ENCODE measurements at regions of chr4 and their contacts with region 1.

Region 1: DNA sequence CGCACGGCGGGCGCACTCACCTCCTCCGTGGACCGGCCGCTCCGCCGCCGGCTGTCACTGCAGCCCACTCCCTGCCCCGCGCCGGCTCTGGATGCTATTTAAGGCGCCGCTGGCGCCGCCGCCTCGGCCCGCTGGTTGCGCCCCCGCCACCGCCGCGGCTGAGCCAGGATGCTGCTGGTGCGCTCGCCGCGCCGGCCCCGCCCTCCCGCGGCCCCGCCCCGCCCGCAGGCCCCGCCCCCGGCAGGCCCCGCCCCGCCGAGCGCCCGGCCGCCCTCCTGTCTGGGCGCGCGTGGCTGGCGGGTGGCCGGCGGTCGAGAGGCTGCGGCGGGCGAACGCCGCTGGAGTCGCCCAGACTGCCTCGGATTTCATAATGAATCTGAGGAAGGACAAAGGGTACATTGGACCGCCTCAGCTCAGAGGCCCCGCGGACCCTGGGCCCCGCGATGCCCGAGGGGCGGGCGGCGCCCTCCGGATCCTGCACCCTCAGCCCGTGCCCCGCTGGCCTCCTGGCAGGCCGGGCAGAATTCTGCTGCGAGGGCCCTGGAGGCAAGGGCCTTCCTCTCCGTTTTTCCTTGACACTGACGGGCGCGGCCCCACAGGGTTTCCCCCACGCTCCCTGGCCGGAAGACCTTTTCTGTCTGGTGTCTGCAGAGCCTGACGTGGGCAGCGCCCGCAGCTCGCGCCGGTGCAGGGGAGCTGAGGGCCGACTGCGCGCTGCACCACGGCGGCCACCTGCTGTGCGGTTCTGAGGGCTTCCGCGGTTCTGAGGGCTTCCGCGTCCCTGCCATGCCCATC is at the start of gene ACSL1:
- DNase-seq: peak; percentile 58
- ATAC-seq: peak; percentile 75
- H3K4me3 ChIP-seq: peak within 1 kb of the TSS; percentile 80
- H3K27ac ChIP-seq: no peak within 1 kb of the TSS
- H3K4me1 ChIP-seq: peaks cover 14% of the 10 kb centered on the region
- H3K27me3 ChIP-seq: no peaks in the 10 kb centered on the region
- CTCF ChIP-seq: no peak
- total RNA-seq, gene ACSL1: 20.0 and 22.9 TPM in 2 replicates

Region 2: DNA sequence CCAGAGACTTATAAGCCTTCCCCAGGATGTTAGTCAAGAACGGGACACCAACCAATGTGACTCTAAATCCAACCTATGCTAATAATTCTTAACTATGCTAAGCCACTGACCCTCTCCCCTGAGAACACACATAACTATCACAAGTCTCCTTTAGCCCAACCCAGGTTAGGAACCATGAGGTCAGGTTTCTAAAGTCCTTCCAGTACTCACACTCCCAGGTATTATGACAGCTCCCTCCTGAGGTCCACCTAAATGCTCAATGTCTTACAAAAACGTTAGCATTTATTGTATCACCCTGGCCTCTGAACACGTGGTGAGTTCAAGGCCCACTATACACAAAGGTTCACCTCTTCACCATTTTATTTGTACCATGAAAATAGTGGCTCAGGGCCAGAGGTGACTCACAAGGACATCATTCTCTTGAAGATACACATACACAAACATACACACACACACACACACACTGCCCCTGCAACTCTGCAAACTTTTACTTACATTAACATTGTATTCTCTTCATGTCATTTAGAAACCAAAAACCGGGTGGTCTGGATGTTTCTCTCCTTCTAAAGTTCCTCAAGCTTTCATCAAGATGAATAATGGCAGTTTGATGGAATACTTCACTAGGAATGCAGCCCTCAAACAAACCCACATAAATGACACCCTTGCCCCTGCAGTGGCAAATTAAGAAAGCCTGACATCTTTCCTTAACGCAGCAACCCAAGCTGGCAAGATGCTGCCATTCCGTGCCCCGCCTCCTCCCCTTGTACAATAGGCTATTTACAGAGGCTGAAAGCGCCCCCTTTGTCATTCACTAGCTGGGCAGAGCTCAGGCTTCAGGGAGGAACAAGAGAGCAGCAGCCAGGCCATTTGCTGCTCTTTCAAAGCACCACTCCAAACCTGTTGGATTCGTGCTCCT is 18.0 kb before region 1 on chr4:
- CTCF ChIA-PET with region 1: no interaction called
- POLR2A ChIA-PET with region 1: no interaction called
- intact Hi-C with region 1: loop called (anchors 2 kb)
- DNase-seq: peak; percentile 87
- ATAC-seq: peak; percentile 50
- H3K4me3 ChIP-seq: peak overlapping the region; percentile 16; the same call in 1 of the 2 replicates
- H3K27ac ChIP-seq: peak overlapping the region; percentile 50
- H3K4me1 ChIP-seq: peaks cover 60% of the 10 kb centered on the region
- H3K27me3 ChIP-seq: no peaks in the 10 kb centered on the region
- CTCF ChIP-seq: 0 out of 2 replicates have a peak, but pooled peaks have one; percentile 21

Region 3: DNA sequence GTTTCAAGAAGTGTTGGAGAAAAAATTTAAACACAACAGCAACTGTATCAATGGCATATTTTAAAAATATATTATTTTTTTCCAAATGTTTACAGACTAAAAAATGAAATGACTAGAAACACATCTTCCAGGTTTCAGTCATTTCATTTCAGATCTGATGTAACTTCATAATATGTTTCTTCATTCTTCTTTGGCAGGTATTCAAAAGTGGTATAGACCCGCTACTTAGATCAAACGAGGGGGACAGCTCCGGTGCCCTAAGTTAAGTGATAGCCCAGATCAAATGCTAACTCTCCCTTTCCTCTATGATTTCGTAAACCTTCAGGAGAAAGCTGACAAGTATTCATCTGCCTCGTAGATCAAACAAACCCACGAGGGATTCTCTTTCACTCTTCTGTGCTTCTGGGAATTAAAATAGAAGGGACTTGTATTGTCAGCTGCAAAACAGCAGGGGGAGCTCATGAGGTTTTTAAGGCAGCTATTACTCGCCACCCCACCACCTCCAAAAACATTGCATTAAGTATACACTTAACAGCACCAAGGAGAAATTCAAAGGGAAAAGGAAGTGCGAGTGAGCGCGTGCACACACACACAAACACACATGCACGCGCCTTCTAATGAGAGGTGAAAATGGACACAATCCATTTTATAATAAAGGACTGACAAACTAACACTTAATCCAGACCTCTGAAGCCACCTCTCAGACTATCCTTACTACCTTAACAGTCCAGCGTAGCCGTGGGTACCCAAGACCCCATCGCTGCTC is 213.6 kb after region 1 on chr4:
- CTCF ChIA-PET with region 1: no interaction called
- POLR2A ChIA-PET with region 1: no interaction called
- intact Hi-C with region 1: no loop called
- DNase-seq: peak; percentile 54
- ATAC-seq: peak; percentile 86
- H3K4me3 ChIP-seq: peak overlapping the region; percentile 51; the same call in 1 of the 2 replicates
- H3K27ac ChIP-seq: no peak overlapping the region
- H3K4me1 ChIP-seq: no peaks in the 10 kb centered on the region
- H3K27me3 ChIP-seq: peaks cover 17% of the 10 kb centered on the region
- CTCF ChIP-seq: peak; percentile 77